Dendritic cell treated with granulocyte-macrophage colony-stimulating factor and Interleukin-4, amounts not matched to agents 40 ng/mL and 50 ng/mL, for 4 days (primary cell): ENCODE measurements at regions of chr9 and their contacts with region 1.

Region 1: DNA sequence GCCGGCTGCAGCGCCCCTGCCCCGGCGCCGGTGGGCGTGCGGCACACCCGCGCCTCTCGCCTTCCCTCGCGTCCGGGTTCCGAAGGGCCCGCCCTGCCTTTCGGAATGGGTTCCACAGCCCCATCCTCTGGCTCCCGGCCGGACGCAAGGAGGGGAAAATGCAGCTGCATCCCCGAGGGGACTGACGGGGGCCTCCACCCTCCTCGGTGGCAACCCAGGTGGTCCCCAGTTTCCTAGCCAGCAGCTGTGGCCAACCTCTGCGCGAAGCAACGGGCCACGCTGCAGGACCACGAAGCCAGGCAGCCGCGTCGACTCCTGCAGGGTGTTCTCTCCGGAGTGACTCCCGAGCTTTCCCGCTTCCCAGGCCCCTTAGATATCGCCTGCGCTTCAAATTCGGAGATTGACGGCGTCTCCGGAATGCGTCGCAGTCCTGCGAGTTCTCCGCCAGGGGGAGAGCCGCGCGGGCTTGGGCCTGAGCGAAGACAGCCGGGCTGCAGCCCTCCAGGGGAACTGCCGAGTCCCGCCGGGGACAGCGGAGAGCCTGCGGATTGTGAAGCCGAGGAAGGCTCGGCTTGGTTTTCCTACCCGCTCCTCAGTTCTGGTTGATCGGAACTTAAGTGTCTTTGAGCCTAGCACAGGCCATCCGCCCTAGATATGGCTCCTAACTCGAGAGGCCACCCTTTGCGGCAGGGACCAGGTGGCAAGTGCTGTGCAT is 582 bp upstream of the APBA1 start:
- H3K4me3 Mint-ChIP-seq: peak overlapping the region; percentile 84
- H3K27ac Mint-ChIP-seq: peak overlapping the region; percentile 80
- H3K4me1 Mint-ChIP-seq: peaks cover 25% of the 10 kb centered on the region
- H3K27me3 Mint-ChIP-seq: peaks cover 18% of the 10 kb centered on the region

Region 2: DNA sequence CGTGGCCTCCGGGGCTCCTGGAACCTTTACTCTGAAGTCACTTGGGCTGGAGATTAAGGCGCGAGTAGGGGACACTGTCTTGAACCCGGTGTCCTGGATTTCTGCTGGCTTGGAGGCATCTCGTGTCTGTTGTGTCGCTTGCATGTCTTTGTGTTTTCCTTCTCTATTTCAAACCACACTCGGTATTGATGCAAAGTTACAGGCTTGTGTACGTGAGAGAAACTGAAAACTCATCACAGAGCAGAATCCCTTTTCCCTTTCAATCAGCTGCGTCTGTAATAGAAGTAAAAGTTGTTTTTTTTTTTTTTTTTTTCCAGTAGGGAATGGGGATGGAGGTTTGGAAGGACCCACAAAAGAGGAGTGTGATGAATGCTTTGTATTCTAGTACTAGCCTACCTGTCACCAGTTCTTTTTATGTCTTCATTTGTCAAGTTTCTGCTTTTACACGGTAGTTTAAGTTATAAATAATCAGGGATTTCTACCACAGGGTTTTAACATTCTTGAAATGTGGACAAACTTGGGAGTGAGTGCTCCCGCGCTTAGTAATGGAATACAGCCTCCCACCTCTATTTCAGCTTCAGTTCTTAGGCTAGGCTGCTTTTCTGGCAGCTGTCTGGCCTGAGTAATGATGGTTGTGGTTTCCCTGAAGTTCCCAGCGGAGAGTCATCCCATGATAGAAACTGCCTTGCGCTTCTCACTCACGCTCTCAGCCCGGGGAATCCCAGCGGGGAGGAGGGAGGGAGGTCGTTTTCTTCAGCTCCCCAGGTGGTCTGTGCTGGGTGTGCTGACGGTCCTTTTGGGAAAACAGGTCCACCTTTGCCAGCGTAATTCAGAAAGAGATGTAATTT is 497.9 kb before region 1 on chr9:
- intact Hi-C with region 1: loop called (anchors 10 kb)
- H3K4me3 Mint-ChIP-seq: peak overlapping the region; percentile 95
- H3K27ac Mint-ChIP-seq: peak overlapping the region; percentile 91
- H3K4me1 Mint-ChIP-seq: peaks cover 51% of the 10 kb centered on the region
- H3K27me3 Mint-ChIP-seq: no peaks in the 10 kb centered on the region

Region 3: DNA sequence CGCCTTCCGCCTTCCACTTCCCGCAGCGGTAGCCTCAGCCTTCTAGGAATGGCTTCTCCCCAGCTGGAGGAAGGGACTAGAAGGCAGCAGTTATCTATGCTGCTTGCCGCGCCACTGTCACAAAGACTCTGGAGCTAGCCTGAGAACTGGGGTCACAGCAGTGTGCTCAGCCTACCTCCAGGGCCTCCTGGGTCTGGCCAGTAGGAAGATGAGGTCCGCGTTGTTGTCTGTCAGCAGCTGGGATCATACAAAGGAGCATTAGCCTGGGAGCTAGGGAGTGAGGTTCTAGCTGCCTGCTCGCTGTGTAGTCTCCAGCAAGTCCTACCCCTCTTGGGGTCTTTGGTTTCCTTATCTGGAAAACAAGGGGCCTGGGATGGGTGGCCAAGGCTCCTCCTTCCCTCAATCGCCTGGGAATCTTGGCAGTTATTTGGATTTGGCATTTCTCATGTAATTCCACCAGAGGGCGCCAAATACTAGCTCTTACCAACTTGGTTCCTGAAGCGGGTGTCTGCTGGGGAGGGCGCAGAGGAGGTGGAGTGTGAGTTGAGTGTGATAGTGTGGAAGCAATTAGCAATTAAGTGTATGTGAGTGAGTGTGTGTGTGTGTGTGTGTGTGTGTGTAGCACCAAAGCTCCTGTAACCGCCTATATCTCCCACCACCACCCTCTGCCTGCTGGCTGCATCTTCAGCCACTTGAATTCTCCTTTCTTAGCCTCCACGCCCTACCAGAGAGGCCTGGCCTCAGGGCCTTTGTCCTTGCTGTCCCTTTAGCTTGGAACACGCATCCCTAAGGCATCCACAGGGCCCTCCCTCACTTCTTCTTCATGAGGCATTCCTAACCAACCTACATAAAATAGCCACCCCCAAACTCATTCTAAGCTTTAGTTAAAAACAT is 250.6 kb before region 1 on chr9:
- intact Hi-C with region 1: loop called (anchors 10 kb)
- H3K4me3 Mint-ChIP-seq: no peak overlapping the region
- H3K27ac Mint-ChIP-seq: no peak overlapping the region
- H3K4me1 Mint-ChIP-seq: no peaks in the 10 kb centered on the region
- H3K27me3 Mint-ChIP-seq: peaks cover 4% of the 10 kb centered on the region

Region 4: GRCh38 chr9:69527454-69527853 is 145.3 kb before region 1 on chr9:
- intact Hi-C with region 1: no loop called
- H3K4me3 Mint-ChIP-seq: no peak overlapping the region
- H3K27ac Mint-ChIP-seq: no peak overlapping the region
- H3K4me1 Mint-ChIP-seq: no peaks in the 10 kb centered on the region
- H3K27me3 Mint-ChIP-seq: peaks cover 4% of the 10 kb centered on the region

Region 5: DNA sequence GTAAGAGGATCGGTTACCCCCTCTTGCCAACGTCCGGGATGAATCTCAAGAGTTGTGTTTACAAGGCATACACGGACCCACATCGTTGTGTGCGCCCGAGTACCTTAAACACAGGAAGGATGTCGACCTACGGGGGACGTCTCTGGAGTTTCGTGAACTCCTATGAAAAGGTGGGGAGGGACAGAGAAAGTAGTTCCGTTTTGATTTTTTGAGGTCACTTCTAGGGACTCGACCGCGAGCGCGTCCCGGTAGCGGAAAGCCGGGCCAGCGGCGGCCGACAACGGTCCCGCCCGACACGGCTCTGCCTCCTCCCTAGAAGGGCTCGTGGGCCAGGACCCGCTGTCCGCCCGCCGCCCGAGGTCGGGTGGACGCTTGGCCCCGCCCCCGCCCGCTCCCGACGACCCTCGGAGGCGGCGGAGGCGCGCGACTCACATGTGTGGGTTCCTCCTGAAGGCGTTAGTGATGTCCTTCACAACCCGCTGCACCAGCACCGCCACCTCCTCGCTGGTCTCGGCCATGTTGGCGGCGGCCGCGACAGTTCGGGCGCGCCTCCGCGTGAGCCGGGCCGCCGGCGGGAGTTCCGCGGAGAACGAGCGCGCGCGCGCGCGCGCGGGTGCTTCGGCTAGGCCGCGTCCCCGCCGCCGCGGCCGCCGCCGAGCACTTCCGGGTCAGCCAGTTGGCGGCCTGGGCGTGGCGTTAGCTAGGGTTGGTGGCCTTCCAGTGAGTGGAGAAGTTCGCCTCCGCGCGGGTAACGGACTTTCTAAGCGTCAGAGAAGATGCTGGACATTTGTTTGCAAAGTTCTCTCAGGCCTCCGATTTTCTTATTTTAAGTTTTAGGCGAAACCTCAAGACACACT is 86.9 kb after region 1 on chr9 and contains the start of gene PTAR1:
- intact Hi-C with region 1: loop called (anchors 1 kb)
- H3K4me3 Mint-ChIP-seq: peak within 1 kb of the TSS; percentile 84
- H3K27ac Mint-ChIP-seq: peak within 1 kb of the TSS; percentile 91
- H3K4me1 Mint-ChIP-seq: peaks cover 21% of the 10 kb centered on the region
- H3K27me3 Mint-ChIP-seq: no peaks in the 10 kb centered on the region

Region 6: DNA sequence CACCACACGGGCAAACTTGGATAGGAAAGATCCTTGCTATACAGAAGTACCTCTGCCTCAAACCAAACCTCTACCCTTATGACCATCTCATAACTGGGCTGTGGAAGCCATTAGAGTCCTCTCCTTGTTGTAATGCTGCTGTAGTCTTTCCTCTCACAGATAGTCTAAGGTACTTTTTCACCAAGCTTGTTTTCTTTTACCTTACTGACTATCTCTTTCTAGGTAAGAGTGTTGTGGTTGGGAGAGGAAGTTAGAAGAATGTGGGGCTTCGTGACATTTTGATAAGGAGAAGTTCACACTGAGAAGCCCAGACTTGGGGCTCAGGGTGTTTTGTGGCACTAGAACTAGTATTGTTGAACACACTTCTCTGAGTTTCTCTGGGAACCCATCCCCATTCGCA is 156.7 kb after region 1 on chr9:
- intact Hi-C with region 1: no loop called
- H3K4me3 Mint-ChIP-seq: no peak overlapping the region
- H3K27ac Mint-ChIP-seq: no peak overlapping the region
- H3K4me1 Mint-ChIP-seq: peaks cover 5% of the 10 kb centered on the region
- H3K27me3 Mint-ChIP-seq: no peaks in the 10 kb centered on the region

Region 7: DNA sequence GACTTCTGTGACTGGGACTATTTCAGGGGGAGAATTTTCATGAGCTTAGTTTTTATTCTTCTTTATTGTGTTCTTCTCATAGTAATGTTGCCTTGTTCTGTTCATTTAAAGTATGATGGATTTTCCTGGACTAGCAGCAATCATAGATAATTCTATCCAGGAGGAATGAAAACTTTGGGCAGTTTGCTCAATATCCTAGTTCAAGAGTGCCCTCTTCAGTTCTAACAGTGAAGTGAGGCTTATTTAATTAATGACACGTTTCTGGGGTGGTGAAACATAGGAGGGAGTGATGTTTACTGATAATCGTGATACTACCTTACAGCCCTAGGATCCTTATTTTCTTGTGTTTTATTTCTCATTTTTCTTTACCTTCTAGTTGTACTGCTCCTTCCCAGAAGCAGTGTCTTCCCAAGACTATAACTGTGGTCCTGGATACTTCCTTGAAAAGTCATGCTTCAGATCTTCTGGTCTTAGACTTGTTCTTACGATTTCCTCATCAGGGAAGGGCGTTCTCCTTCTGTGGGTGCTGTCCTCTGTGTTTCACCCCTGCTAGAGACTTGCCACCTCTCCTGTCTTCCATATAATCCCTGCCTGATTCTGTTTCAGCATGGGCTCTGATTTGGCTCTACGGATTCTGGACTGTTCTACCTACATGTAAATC is 205.2 kb after region 1 on chr9:
- intact Hi-C with region 1: loop called (anchors 2 kb)
- H3K4me3 Mint-ChIP-seq: no peak overlapping the region
- H3K27ac Mint-ChIP-seq: no peak overlapping the region
- H3K4me1 Mint-ChIP-seq: peaks cover 6% of the 10 kb centered on the region
- H3K27me3 Mint-ChIP-seq: peaks cover 2% of the 10 kb centered on the region

Region 8: DNA sequence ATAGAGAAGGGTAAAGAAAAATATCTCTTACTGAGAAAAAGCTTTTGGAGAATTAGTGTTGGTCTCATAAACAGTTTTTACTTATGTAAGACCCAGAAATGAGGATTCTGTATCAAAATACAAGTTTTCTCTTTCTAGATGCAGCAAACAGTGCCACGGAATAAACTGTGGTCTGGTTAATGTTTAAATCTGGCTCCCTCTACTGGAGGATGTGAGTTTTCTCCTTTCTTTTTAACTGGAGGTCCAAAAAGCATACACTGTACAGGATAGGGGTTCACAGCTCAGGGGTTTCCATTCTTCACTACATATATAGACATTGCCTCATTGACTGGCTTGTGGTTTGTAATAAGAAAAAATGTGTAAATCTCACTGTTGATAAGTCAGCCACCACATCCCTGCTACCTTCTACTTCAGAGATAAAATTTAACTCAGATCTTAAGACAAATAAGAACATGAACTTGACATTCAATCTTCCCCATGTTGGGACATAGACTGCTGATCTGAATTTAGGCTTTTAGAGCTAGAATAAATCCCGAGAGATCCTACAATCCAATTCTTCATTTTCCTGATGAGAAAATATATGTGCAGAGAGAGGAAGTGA is 246.8 kb after region 1 on chr9:
- intact Hi-C with region 1: loop called (anchors 5 kb)
- H3K4me3 Mint-ChIP-seq: no peak overlapping the region
- H3K27ac Mint-ChIP-seq: no peak overlapping the region
- H3K4me1 Mint-ChIP-seq: peaks cover 12% of the 10 kb centered on the region
- H3K27me3 Mint-ChIP-seq: peaks cover 16% of the 10 kb centered on the region

Region 9: GRCh38 chr9:70258692-70259511 is 586.1 kb after region 1 on chr9 and contains the start of gene SMC5:
- intact Hi-C with region 1: loop called (anchors 10 kb)
- H3K4me3 Mint-ChIP-seq: peak within 1 kb of the TSS; percentile 85
- H3K27ac Mint-ChIP-seq: peak within 1 kb of the TSS; percentile 95
- H3K4me1 Mint-ChIP-seq: peaks cover 51% of the 10 kb centered on the region
- H3K27me3 Mint-ChIP-seq: no peaks in the 10 kb centered on the region